Lower lobe of right lung (tissue), 2 donors: ENCODE measurements at regions of chr11 and their contacts with region 1.

Region 1: GRCh38 chr11:66684635-66685034 is 6.9 kb upstream of the RBM4B start:
- DNase-seq: no peak
- ATAC-seq: no peak
- H3K4me3 ChIP-seq: no peak overlapping the region
- H3K27ac ChIP-seq: no peak overlapping the region
- H3K4me1 ChIP-seq: no peaks in the 10 kb centered on the region
- H3K27me3 ChIP-seq: no peaks in the 10 kb centered on the region
- CTCF ChIP-seq: no peak

Region 2: DNA sequence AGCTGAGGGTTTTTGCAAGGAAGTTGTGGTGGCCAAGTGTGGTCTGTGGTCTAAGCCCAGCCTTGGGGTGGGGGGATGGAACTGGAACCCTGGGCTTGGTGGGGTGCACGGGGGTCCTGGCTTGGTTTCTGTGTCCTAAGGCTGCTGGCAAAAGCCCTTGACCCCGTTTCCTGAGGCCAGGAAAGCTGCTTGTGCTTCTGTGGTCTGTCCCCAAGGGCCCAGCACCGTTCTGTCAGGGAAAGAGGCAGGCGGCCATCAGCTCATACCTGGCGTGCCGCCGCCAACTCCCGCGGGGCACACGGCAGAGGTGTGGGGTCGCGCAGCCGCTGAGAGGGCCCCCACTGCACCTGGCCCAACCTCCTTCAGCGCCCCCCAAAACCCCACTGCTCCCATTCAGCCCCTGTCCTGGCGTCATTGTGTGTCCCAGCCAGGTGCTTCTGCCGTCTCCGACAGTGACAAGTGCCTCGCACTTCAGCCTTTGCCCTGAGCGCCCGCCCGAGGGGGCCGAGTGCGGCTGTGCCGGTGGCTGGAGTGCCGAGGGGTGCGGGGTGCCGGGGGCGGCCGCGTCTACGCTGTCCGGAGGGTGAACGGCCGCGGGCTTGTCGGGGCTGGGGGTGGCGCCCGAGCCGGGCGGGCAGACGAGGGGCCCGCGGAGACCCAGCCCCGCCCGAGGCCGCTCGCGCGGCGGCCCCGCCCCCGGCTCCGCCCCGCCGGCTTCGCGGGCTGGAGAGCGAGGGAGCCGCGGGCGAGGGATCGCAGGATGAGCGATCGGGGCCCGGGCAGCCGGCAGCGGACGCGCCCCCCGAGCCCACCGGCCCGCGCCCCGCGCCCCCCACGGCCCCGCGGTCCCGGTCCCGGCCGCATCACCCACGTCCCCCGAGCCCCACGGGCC is 406.9 kb before region 1 on chr11 and contains the start of gene CNIH2:
- intact Hi-C with region 1: no loop called
- DNase-seq: no peak
- ATAC-seq: peak; percentile 6 to 29
- H3K4me3 ChIP-seq: peak within 1 kb of the TSS; percentile 44
- H3K27ac ChIP-seq: no peak within 1 kb of the TSS
- H3K4me1 ChIP-seq: peaks cover 17% of the 10 kb centered on the region
- H3K27me3 ChIP-seq: no peaks in the 10 kb centered on the region
- CTCF ChIP-seq: no peak
- total RNA-seq, gene CNIH2: 0.89 TPM

Region 3: DNA sequence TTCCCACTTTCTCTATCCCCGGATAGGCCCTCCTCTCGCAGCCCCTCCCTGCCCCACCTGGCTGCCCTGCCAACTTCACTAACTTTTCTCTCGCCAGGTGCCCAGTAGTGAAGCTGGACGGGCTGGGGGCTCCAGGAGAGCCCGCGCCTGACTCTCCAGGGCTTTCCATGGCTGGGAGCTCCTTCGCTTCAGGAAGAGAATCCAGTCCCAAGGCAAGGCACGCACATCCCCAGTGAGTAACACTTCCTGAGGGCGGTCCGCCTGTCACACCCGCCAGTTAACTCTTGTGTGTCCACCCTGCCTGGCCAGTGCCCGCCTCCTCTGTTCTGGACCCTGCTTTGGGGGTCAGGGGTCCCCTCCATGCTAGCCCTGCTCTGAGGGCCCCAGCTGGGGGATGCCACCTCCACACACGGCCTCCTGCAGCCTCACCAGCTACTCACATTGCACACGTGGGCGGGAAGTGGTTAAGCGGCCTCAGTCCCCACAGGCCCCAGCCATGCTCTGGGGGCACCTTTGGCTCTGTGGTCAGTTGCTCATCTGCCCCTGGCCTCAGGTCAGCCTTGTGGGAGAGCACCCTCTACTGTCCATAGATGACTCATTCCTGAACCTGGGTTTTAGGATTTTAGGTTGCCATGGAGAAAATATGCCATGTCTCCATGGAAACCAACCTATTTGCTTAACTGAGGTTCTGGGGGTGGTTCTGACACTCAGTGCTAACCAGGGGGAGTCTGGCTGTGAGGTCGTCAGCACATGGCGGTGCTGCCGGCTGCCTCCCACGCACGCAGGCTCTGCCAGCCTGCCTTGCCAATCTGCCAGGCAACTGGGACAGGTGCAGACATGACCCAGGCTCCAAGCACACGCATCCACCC is 348.2 kb before region 1 on chr11 and contains the start of gene RIN1:
- intact Hi-C with region 1: no loop called
- DNase-seq: peak; percentile 65
- ATAC-seq: peak; percentile 70 to 76
- H3K4me3 ChIP-seq: peak within 1 kb of the TSS; percentile 63
- H3K27ac ChIP-seq: peak within 1 kb of the TSS; percentile 82
- H3K4me1 ChIP-seq: peaks cover 29% of the 10 kb centered on the region
- H3K27me3 ChIP-seq: no peaks in the 10 kb centered on the region
- CTCF ChIP-seq: peak; percentile 22
- total RNA-seq, gene RIN1: 8.2 TPM

Region 4: DNA sequence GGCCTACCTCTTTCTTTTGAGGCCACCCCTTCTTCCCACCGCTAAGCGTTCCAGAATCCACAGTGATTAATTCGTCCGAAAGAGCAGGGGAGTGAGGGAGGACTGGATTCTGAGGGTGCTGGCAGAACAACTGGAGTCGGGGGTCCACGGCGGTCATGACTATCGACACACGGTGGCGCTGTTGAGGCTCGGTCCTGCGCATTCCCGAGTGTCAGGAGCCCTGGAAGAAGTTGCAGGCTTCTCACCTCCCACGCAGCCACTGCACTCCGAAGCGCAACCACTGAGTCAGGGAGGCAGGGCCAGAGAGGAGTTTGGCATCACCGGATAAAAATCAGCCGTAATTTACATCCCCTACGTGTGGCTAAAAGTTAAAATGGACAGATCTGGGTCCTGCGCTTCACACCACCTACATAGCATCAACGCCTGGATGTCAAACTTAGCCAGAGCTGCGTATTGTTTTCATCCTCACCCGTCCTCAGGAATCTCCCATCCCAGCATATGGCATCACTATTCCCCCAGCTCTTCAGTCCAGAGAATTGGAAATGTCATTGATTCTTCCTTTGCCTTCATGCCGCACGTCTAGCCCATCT is 105.5 kb before region 1 on chr11:
- intact Hi-C with region 1: loop called (anchors 5 kb)
- DNase-seq: peak; percentile 88
- ATAC-seq: peak; percentile 93
- H3K4me3 ChIP-seq: no peak overlapping the region
- H3K27ac ChIP-seq: no peak overlapping the region
- H3K4me1 ChIP-seq: peaks cover 9% of the 10 kb centered on the region
- H3K27me3 ChIP-seq: peaks cover 4% of the 10 kb centered on the region
- CTCF ChIP-seq: peak; percentile 77

Region 5: DNA sequence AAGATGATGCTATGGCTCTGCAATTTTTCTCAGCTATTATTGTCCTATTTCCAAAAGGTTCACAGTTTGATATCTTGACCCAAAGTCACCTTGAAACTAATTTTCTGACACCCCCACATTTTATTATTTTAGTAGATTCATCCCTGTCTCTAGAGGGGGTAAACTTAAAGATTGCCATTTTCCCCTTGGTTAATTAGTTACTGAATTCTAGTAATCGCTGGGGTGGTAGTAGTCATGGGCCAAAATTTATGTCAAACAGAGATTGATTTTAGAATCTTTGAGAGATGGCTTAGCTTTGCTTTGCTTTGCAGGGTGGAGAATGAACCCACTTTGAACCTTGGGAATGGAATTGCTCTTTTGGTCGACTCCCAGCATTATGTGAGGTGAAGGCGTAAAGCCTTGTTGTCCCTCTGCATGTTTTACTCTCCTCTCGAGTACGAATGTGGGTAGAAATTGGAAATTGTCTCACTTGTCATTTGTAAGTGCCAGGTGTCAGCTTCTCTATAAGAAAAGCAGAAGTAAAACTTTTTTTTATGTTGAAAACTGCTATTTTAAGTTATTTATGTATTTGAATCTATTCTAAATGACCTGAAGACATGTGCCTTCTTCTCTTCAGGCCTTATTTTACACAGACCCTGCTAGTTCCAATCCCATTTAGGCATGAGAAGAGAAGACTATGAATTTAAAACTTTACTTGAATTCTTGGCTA is 116.2 kb after region 1 on chr11:
- intact Hi-C with region 1: no loop called
- DNase-seq: no peak
- ATAC-seq: no peak
- H3K4me3 ChIP-seq: no peak overlapping the region
- H3K27ac ChIP-seq: no peak overlapping the region
- H3K4me1 ChIP-seq: no peaks in the 10 kb centered on the region
- H3K27me3 ChIP-seq: no peaks in the 10 kb centered on the region
- CTCF ChIP-seq: no peak

Region 6: GRCh38 chr11:66868726-66869566 is 184.3 kb after region 1 on chr11:
- intact Hi-C with region 1: no loop called
- DNase-seq: peak; percentile 85
- ATAC-seq: peak; percentile 83 to 90
- H3K4me3 ChIP-seq: no peak overlapping the region
- H3K27ac ChIP-seq: no peak overlapping the region
- H3K4me1 ChIP-seq: no peaks in the 10 kb centered on the region
- H3K27me3 ChIP-seq: no peaks in the 10 kb centered on the region
- CTCF ChIP-seq: peak; percentile 50